H1 (cell line): ENCODE measurements at regions of chr9 and their contacts with region 1.

Region 1: DNA sequence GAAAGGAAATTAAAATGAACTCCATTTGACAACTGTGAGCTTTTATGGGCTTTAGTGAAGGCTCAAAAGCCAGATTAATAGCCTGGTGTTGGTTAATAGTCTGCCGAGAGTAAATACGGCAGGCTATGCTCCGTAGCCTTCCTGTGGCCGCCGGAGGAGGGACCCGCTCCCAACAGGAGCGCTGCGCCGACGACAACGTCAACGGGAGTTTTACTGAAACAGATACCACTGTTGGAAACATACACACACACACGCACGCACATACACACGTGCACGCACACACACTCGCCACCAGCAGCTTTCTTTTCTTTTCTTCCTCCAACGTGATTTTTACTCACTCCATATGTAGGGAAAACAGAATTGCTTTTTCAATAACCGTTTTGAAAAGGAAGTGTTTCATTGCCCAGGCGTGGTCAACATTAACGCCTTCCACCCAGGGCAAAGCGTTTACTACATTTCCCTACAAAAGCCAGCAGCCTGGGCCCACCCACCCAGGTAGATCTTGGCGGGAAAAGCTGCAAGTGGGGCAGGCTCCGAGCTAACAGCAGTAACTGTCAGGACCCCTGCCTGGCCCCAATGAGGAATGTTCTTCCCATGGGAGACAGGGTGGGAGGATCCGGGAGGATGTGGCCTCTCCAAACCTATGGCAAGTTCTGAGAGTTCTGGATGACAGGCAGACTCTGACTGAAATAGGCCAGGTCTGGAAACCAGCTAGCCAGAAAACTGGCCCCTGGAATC is 72.3 kb downstream of the PAX5 start:
- DNase-seq: peak in 1 of 2 experiments; percentile 43
- H3K4me3 ChIP-seq: no peak overlapping the region
- H3K27ac ChIP-seq: no peak overlapping the region
- H3K4me1 ChIP-seq: no peaks in the 10 kb centered on the region
- H3K27me3 ChIP-seq: no peaks in the 10 kb centered on the region; a peak in 1 of 7 replicates
- CTCF ChIP-seq: no peak
- EP300 ChIP-seq: no peak
- POLR2A ChIP-seq: no peak
- RAD21 ChIP-seq: no peak

Region 2: GRCh38 chr9:36974731-36975130 is 13.0 kb after region 1 on chr9:
- CTCF ChIA-PET with region 1: interaction called, 72 read pairs
- POLR2A ChIA-PET with region 1: interaction called, 3 read pairs
- DNase-seq: peak in 1 of 2 experiments; percentile 41
- H3K4me3 ChIP-seq: no peak overlapping the region
- H3K27ac ChIP-seq: no peak overlapping the region
- H3K4me1 ChIP-seq: peaks cover 0 to under 1% (median under 1%) of the 10 kb centered on the region in 4 experiments; a peak in 2 of 7 replicates
- H3K27me3 ChIP-seq: peaks cover 0 to 3% (median 1%) of the 10 kb centered on the region in 4 experiments; a peak in 2 of 7 replicates
- CTCF ChIP-seq: peak; percentile 29 to 41 (median 33)
- EP300 ChIP-seq: no peak
- POLR2A ChIP-seq: no peak
- RAD21 ChIP-seq: peak; percentile 30 to 45; a peak in 3 of 4 replicates

Region 3: DNA sequence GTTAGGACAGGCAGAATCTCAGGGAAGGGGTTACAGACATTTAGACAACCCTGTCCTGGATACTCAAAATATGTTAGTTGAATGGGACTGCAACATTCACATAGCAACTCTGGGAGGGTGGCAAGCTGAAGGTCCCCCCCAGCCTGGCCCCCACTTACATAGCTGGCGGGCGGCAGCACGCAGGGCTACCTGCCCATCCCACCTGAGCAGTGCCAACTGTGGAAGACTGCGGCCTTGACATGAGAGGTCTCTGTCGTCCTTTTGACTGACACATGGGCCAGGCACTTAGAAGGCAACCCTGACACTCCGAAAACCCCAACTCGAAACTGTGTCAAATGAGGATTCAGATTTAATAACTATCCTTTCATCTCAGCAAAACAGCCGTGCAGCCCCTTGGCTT is 55.8 kb after region 1 on chr9:
- CTCF ChIA-PET with region 1: no interaction called
- POLR2A ChIA-PET with region 1: no interaction called
- DNase-seq: no peak
- H3K4me3 ChIP-seq: no peak overlapping the region
- H3K27ac ChIP-seq: no peak overlapping the region
- H3K4me1 ChIP-seq: peaks cover 0 to 2% (median 0%) of the 10 kb centered on the region in 4 experiments; a peak in 1 of 7 replicates
- H3K27me3 ChIP-seq: peaks cover 2 to 18% (median 15%) of the 10 kb centered on the region in 4 experiments
- CTCF ChIP-seq: no peak
- EP300 ChIP-seq: no peak
- POLR2A ChIP-seq: no peak
- RAD21 ChIP-seq: no peak